Activated T-helper 1 cell treated with anti-CD3 and anti-CD28 coated beads, Interleukin-12 subunit alpha, Interleukin-12 subunit beta, Interleukin-2, Interleukin-4 antibody, amounts not matched to agents 30 ng/mL and 10 ng/mL and 1 ng/mL, durations not matched to agents 14 hours and 24 hours and 36 hours (primary cell): ENCODE measurements at regions of chr19 and their contacts with region 1.

Region 1: DNA sequence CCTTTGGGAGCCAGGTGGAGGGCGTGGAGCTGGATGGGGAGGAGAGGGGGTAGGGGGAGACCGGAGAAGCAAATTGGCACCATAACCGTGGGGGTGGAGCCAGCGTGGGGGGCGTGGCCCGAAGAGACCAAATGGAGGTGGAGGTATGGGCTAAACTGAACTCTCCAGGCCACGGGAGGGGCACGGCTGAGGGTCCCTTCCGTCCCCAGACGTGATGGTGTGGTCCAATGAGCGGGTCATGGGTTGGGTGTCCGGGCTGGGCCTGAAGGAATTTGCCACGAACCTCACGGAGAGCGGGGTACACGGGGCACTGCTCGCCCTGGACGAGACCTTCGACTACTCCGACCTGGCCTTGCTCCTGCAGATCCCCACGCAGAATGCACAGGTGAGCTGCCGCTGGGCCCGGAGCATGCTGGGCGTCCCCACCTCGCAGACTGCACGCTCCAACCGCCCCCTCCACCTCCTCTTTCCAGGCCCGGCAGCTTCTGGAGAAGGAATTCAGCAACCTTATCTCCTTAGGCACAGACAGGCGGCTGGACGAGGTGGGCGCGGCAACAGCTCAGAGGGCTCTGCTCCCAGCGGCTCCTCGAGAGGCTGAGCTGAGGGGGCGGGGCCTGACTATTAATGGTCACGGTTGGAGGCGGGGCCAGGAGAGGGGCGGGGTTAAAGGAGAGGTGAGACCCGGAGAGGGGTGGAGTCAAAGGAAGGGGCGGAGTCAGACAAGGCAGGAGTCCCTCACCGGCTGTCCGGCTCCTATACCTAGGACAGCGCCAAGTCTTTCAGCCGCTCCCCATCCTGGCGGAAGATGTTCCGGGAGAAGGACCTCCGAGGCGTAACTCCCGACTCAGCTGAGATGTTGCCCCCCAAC is 6.2 kb downstream of the HRC start:
- DNase-seq: peak; percentile 70
- H3K4me3 Mint-ChIP-seq: peak overlapping the region; percentile 78
- H3K27ac Mint-ChIP-seq: no peak overlapping the region
- H3K4me1 Mint-ChIP-seq: peaks cover 35% of the 10 kb centered on the region
- H3K27me3 Mint-ChIP-seq: peaks cover 59% of the 10 kb centered on the region

Region 2: DNA sequence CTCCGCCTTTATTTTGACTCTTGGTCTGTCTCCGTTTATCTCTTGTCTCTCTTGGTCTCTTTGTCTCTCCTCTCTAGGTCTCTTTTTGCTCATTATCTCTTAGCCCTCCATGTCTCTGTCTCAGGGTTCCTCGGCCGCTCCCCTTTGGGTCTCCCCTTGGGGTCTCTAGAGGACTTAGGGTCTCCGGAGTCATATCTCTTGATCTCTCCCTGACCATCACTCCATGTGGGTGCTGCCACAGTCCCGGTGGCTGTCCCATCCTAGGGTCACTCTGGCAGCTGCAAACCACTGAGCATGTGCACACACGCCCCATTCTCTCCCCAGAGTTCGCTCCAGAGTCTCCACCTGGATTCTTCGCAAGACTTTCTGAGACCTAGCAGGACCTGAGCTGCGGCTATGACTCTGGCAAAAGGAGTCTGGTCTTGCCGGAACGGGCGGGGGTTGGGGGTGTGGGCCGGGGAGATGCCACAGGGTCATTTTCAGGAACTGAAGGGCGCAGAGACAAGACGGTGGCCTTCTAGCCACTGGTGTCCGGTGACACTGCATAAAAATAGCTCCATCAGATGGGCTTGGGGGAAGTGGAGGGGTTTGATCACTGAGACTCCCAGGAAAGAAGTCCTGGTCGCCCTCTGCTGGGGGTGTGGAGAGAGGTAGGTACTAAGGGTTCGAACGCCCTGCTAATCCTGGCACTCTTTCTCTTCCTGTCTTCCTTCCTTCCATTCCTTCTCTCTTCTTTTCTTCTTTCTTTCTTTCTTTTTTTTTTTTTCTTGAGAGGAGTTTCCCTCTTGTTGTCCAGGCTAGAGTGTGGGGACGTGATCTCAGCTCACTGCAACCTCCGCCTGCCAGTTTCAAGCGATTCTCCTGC is 75.3 kb before region 1 on chr19:
- intact Hi-C with region 1: loop called (anchors 1 kb)
- DNase-seq: no peak
- H3K4me3 Mint-ChIP-seq: peak overlapping the region; percentile 42
- H3K27ac Mint-ChIP-seq: no peak overlapping the region
- H3K4me1 Mint-ChIP-seq: peaks cover 10% of the 10 kb centered on the region
- H3K27me3 Mint-ChIP-seq: peaks cover 42% of the 10 kb centered on the region

Region 3: DNA sequence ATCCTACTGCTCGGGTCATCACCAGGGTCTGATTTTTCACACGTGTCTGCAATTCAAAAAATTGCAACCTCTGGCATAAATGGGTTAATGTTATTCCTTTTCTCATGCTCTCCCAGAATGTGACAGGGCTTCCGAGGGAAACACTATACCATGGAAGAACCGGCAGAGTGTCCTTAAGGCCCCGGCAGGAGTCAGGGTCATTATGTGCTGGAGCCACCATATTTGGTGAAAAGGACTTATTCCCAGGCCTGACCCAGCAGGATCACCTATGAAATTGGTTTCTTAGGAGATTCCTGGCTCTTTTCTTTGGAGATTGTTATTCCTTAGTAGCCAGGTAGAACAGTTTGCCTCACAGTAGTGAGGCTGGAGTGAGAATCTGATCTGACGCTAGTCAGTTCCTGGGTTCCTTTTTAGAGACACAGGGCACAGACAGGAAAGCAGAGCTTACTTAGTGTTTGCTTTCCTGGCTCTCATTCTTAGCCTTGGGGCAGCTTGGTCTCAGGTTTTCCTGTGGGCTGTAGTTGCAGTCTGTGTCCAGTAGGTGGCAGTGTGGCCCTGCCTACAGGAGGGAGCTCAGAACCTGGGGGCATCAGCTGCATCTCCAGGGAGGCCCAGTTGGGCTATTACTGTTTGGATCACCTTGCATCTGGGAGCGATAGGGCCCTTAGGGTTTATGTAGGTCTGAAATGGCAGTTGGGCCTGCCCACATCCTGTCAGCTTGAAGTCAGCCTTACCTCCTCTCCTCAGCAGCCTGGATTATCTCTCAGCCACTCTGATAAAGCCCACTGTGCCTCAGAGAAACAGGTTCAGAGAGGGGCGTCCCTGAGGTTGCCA is 51.3 kb before region 1 on chr19:
- intact Hi-C with region 1: loop called (anchors 1 kb)
- DNase-seq: peak; percentile 68
- H3K4me3 Mint-ChIP-seq: no peak overlapping the region
- H3K27ac Mint-ChIP-seq: no peak overlapping the region
- H3K4me1 Mint-ChIP-seq: peaks cover 15% of the 10 kb centered on the region
- H3K27me3 Mint-ChIP-seq: no peaks in the 10 kb centered on the region

Region 4: GRCh38 chr19:49127674-49128544 is 21.1 kb before region 1 on chr19:
- intact Hi-C with region 1: loop called (anchors 1 kb)
- DNase-seq: peak; percentile 91
- H3K4me3 Mint-ChIP-seq: peak overlapping the region; percentile 88
- H3K27ac Mint-ChIP-seq: peak overlapping the region; percentile 81
- H3K4me1 Mint-ChIP-seq: peaks cover 17% of the 10 kb centered on the region
- H3K27me3 Mint-ChIP-seq: peaks cover 6% of the 10 kb centered on the region

Region 5: DNA sequence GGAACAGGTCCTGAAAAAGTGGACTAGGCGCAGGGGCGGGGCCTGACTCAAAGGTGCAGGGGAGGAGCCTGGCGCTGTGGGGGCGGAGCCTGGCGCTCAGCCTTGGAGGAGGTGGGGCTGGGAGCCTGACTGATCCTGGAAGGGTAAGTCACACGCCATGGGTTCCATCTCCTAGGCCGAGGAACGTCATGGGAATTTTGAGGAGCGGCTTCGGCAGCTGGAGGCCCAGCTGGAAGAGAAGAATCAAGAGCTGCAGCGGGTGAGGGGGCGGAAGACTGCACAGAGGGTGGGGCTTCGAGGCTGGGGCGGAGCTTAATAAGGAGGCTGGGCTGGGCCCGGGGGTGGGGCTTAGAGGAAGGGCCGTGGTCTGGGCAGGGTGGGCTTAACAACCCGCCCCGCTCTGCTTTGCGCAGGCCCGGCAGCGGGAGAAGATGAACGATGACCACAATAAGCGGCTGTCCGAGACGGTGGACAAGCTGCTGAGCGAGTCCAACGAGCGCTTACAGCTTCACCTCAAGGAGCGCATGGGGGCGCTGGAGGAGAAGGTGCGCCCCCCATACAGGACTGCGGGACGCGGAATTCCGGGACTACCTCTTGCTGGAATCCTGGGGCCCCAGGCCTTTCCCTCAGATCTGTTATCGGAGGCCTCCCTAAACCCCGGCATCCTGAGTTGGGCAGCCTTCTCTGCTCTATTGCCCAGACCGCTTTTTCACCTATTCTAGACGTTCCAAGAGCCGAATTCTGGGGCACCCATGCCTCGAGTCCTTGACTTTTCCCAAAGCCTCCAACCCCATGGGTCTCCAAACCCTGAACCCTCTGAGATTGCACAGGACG is 15.2 kb before region 1 on chr19:
- intact Hi-C with region 1: loop called (anchors 1 kb)
- DNase-seq: peak; percentile 55
- H3K4me3 Mint-ChIP-seq: peak overlapping the region; percentile 75
- H3K27ac Mint-ChIP-seq: no peak overlapping the region
- H3K4me1 Mint-ChIP-seq: peaks cover 17% of the 10 kb centered on the region
- H3K27me3 Mint-ChIP-seq: peaks cover 2% of the 10 kb centered on the region

Region 6: GRCh38 chr19:49200238-49200862 is 51.3 kb after region 1 on chr19:
- intact Hi-C with region 1: loop called (anchors 5 kb)
- DNase-seq: no peak
- H3K4me3 Mint-ChIP-seq: no peak overlapping the region
- H3K27ac Mint-ChIP-seq: no peak overlapping the region
- H3K4me1 Mint-ChIP-seq: no peaks in the 10 kb centered on the region
- H3K27me3 Mint-ChIP-seq: peaks cover 2% of the 10 kb centered on the region

Region 7: GRCh38 chr19:49213791-49214190 is 64.8 kb after region 1 on chr19:
- intact Hi-C with region 1: no loop called
- DNase-seq: no peak
- H3K4me3 Mint-ChIP-seq: no peak overlapping the region
- H3K27ac Mint-ChIP-seq: no peak overlapping the region
- H3K4me1 Mint-ChIP-seq: no peaks in the 10 kb centered on the region
- H3K27me3 Mint-ChIP-seq: peaks cover 3% of the 10 kb centered on the region